HAP-1 (cell line): ENCODE measurements at regions of chr9 and their contacts with region 1.

Region 1: GRCh38 chr9:72364679-72365524 is at the start of gene ZFAND5:
- DNase-seq: peak; percentile 99
- H3K4me3 ChIP-seq: peak within 1 kb of the TSS; percentile 70
- H3K4me1 ChIP-seq: peaks cover 31% of the 10 kb centered on the region
- H3K27me3 ChIP-seq: no peaks in the 10 kb centered on the region

Region 2: GRCh38 chr9:72443855-72444254 is 79.0 kb after region 1 on chr9:
- in situ Hi-C with region 1: loop called (anchors 5 kb)
- DNase-seq: no peak
- H3K4me3 ChIP-seq: no peak overlapping the region
- H3K4me1 ChIP-seq: peaks cover 18% of the 10 kb centered on the region
- H3K27me3 ChIP-seq: no peaks in the 10 kb centered on the region; the same call in 1 of the 2 replicates

Region 3: GRCh38 chr9:72680593-72681282 is 315.8 kb after region 1 on chr9:
- in situ Hi-C with region 1: loop called (anchors 10 kb)
- DNase-seq: peak; percentile 96 to 100
- H3K4me3 ChIP-seq: no peak overlapping the region
- H3K4me1 ChIP-seq: peaks cover 81% of the 10 kb centered on the region
- H3K27me3 ChIP-seq: no peaks in the 10 kb centered on the region

Region 4: DNA sequence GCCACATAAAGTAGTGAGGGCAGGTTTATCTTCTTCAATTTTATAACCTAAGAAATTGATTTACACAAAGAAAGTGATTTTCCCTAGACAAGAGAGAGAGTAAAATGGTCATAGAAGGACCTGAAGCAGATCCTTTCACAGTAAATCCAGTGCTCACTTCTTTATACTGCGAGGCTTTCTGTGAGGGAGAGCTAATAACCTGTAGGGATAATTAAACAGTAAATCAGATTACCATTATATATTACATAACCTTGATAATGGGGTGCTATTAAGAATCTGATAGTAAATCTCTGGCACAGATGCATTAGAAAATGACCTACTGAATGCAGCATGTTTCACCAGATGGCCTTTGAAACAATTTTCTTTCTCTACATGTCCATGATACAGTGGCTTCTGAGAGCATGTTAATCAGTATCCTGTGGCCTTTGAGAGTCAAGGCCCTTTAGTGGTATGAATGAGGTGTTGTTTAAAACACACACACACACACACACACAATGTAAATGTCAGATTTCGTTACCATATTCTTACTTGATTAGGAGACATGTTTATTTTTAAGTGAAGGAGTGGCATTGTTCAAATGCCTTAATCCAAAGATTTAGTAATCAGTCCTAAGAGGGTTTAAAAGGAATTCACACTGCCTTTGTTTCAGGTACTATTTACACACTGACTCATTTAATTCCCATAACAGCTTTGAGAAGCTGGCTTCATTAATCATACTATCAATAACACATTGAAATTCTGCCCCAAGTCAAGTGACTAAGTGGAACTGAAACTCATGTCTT is 463.2 kb after region 1 on chr9:
- in situ Hi-C with region 1: no loop called
- DNase-seq: peak; percentile 28 to 92
- H3K4me3 ChIP-seq: no peak overlapping the region
- H3K4me1 ChIP-seq: peaks cover 32% of the 10 kb centered on the region
- H3K27me3 ChIP-seq: no peaks in the 10 kb centered on the region